ENCODE measurements at regions of chr1 and their contacts with region 1.

Region 1: DNA sequence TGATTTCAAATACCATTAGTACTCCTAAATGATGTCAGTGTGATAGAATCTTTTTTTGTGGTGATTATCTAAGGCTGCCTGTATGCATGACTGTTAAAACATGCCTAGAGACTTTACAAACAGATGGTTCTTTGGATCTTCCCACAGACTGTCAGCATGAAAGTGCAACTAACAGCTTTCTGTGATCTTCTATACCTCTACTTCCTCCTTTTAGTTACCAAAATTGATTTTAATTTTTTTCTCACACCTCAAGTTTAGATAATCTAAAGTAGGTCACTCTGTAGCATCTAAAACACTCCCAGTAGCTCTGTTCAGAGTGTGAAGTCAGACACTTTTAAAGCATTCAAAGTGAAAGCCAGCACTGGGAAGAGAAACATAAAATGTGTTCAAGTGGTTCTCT is 534.5 kb downstream of the PTPRC start:
- DNase-seq: no peak
- H3K4me3 ChIP-seq: no peak overlapping the region
- H3K27ac ChIP-seq: no peak overlapping the region
- H3K4me1 ChIP-seq: no peaks in the 10 kb centered on the region
- H3K27me3 ChIP-seq: no peaks in the 10 kb centered on the region
- CTCF ChIP-seq: no peak

Region 2: GRCh38 chr1:199377211-199377610 is 203.9 kb after region 1 on chr1:
- CTCF ChIA-PET with region 1: no interaction called
- POLR2A ChIA-PET with region 1: no interaction called
- intact Hi-C with region 1: loop called (anchors 10 kb)
- DNase-seq: no peak
- H3K4me3 ChIP-seq: no peak overlapping the region
- H3K27ac ChIP-seq: no peak overlapping the region
- H3K4me1 ChIP-seq: no peaks in the 10 kb centered on the region
- H3K27me3 ChIP-seq: no peaks in the 10 kb centered on the region
- CTCF ChIP-seq: no peak